GM12878 (cell line): ENCODE measurements at regions of chr6 and their contacts with region 1.

Region 1: DNA sequence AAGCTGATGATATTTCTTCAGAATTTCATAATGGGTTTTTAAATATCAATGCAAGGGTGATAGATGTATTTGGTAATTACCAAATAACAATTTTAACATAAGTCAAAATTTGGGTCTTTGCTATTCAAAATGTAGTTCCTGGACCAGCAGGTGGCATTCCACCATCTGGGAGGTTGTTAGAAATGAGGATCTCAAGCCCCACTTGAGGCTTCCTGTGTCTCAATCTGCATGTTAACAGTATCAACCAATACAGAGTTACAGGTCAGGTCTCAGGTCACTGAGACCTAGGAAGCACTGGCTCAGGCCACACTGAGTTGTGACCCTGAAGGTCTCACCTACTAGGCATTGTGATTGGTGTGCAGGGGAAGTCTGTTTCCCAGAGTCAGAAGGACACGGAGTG is 57.3 kb upstream of the MTRF1L start:
- DNase-seq: no peak
- ATAC-seq: peak; percentile 58
- H3K4me3 ChIP-seq: no peak overlapping the region
- H3K27ac ChIP-seq: no peak overlapping the region
- H3K4me1 ChIP-seq: no peaks in the 10 kb centered on the region
- H3K27me3 ChIP-seq: no peaks in the 10 kb centered on the region; a peak in 1 of 4 replicates
- CTCF ChIP-seq: peak; percentile 8 to 30 (median 15); a peak in 2 of 6 replicates
- EP300 ChIP-seq: no peak
- POLR2A ChIP-seq: no peak
- RAD21 ChIP-seq: peak; percentile 20; the same call in 1 of the 2 replicates

Region 2: GRCh38 chr6:152993431-152993830 is 66.3 kb before region 1 on chr6:
- CTCF ChIA-PET with region 1: no interaction called
- POLR2A ChIA-PET with region 1: no interaction called
- RAD21 ChIA-PET with region 1: no interaction called
- SMC1A ChIA-PET with region 1: no interaction called
- in situ Hi-C with region 1: no loop called
- intact Hi-C with region 1: no loop called
- DNase-seq: no peak
- ATAC-seq: peak; percentile 59
- H3K4me3 ChIP-seq: no peak overlapping the region
- H3K27ac ChIP-seq: no peak overlapping the region
- H3K4me1 ChIP-seq: 0 out of 2 replicates have a peak, but pooled peaks cover 2% of the 10 kb centered on the region
- H3K27me3 ChIP-seq: no peaks in the 10 kb centered on the region
- CTCF ChIP-seq: peak in 1 of 3 experiments; percentile 12; a peak in 1 of 6 replicates
- EP300 ChIP-seq: no peak
- POLR2A ChIP-seq: no peak
- RAD21 ChIP-seq: no peak

Region 3: DNA sequence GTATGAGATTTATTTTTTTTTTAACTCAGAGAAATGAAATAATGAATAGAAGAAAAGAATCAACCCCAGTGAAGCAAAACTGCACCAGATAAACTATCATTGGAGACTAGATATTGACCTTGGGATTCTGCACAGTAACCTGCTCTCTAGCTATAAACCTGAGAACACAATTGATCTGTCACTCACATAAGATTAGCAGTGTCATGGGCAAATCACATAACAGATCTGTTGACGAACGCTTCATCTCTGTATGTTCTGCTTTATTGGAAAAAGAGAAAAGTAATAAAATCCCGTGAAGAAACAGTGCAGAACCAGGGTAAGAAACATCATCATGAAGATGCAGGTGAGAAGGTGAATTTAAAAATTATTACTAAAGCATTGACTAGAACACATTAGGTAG is 124.2 kb after region 1 on chr6:
- CTCF ChIA-PET with region 1: no interaction called
- POLR2A ChIA-PET with region 1: no interaction called
- RAD21 ChIA-PET with region 1: no interaction called
- SMC1A ChIA-PET with region 1: no interaction called
- in situ Hi-C with region 1: no loop called
- intact Hi-C with region 1: no loop called
- DNase-seq: no peak
- ATAC-seq: no peak
- H3K4me3 ChIP-seq: no peak overlapping the region
- H3K27ac ChIP-seq: no peak overlapping the region
- H3K4me1 ChIP-seq: no peaks in the 10 kb centered on the region
- H3K27me3 ChIP-seq: no peaks in the 10 kb centered on the region; a peak in 1 of 4 replicates
- CTCF ChIP-seq: no peak
- EP300 ChIP-seq: no peak
- POLR2A ChIP-seq: no peak
- RAD21 ChIP-seq: no peak

Region 4: GRCh38 chr6:153312641-153313040 is 252.9 kb after region 1 on chr6:
- CTCF ChIA-PET with region 1: no interaction called
- POLR2A ChIA-PET with region 1: no interaction called
- RAD21 ChIA-PET with region 1: no interaction called
- SMC1A ChIA-PET with region 1: no interaction called
- in situ Hi-C with region 1: loop called (anchors 10 kb)
- intact Hi-C with region 1: no loop called
- DNase-seq: no peak
- ATAC-seq: peak; percentile 85
- H3K4me3 ChIP-seq: no peak overlapping the region
- H3K27ac ChIP-seq: no peak overlapping the region
- H3K4me1 ChIP-seq: no peaks in the 10 kb centered on the region
- H3K27me3 ChIP-seq: no peaks in the 10 kb centered on the region
- CTCF ChIP-seq: peak; percentile 55 to 74 (median 65)
- EP300 ChIP-seq: no peak
- POLR2A ChIP-seq: no peak
- RAD21 ChIP-seq: peak; percentile 59

Region 5: GRCh38 chr6:153424719-153425400 is 365.1 kb after region 1 on chr6:
- CTCF ChIA-PET with region 1: no interaction called
- POLR2A ChIA-PET with region 1: no interaction called
- RAD21 ChIA-PET with region 1: no interaction called
- SMC1A ChIA-PET with region 1: no interaction called
- in situ Hi-C with region 1: no loop called
- intact Hi-C with region 1: no loop called
- DNase-seq: no peak
- ATAC-seq: no peak
- H3K4me3 ChIP-seq: no peak overlapping the region
- H3K27ac ChIP-seq: no peak overlapping the region
- H3K4me1 ChIP-seq: no peaks in the 10 kb centered on the region
- H3K27me3 ChIP-seq: no peaks in the 10 kb centered on the region
- CTCF ChIP-seq: no peak
- EP300 ChIP-seq: no peak
- POLR2A ChIP-seq: no peak
- RAD21 ChIP-seq: no peak